ENCODE measurements at regions of chr9 and their contacts with region 1.

Region 1: DNA sequence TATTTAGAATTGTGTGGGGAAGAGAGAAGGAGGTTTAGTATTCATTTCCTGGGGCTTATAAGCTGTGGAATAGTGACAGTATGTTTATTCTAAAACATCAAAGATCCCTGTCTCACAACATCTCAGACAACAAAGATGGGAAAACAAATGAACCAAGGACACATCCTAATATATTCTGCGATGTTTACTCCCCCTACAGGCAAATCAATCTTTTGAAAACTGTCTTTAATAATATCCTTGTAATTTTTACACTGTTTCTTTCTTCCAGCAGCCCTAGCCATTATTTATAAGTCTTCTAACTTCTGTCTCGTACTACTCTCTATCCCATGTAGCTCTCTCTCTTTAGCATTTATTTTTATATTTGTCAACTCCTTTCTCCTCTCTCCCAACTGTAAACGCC is 33.5 kb upstream of the TMEM252 start:
- DNase-seq: no peak
- H3K4me3 ChIP-seq: no peak overlapping the region
- H3K27me3 ChIP-seq: no peaks in the 10 kb centered on the region
- CTCF ChIP-seq: peak; percentile 32; the same call in 1 of the 2 replicates

Region 2: DNA sequence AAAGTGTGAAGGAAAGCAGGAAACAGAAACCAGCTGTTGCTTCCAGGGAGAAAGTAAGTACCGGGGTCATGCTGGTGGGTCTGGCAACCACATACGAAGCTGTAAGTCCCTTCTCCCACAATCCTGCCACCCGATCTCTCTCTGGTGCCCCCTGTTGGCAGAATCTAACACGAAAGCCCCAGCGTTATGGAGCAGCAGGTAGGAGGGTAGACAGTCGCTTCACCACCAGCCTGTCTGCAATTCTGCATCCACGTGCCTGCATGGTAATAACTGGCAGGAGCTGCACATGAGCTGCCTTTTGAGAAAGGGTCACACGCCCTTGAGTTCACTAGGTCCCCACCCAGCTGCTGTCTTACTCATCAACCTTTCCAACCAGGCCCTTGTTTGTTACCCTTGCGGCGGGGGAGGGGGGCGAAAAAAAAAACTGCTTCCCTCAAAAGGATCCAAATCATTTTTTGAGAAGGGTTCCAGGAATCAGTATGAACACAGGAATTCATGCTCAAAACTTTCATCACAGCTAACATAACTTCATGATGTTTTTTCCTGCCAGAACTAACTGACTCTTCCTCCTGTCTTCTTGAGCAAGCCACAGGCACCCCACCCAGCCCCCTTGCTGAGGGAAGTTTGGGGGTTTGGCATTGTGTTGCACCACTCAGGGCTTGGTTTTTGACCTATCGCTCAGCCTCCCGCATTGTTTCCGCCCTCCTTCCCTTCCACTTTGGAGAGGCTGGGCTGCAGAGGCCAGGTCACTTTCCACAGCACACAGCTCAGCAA is 13.9 kb before region 1 on chr9:
- CTCF ChIA-PET with region 1: interaction called, 12 read pairs
- POLR2A ChIA-PET with region 1: no interaction called
- DNase-seq: no peak
- H3K4me3 ChIP-seq: no peak overlapping the region
- H3K27me3 ChIP-seq: no peaks in the 10 kb centered on the region
- CTCF ChIP-seq: peak; percentile 47

Region 3: DNA sequence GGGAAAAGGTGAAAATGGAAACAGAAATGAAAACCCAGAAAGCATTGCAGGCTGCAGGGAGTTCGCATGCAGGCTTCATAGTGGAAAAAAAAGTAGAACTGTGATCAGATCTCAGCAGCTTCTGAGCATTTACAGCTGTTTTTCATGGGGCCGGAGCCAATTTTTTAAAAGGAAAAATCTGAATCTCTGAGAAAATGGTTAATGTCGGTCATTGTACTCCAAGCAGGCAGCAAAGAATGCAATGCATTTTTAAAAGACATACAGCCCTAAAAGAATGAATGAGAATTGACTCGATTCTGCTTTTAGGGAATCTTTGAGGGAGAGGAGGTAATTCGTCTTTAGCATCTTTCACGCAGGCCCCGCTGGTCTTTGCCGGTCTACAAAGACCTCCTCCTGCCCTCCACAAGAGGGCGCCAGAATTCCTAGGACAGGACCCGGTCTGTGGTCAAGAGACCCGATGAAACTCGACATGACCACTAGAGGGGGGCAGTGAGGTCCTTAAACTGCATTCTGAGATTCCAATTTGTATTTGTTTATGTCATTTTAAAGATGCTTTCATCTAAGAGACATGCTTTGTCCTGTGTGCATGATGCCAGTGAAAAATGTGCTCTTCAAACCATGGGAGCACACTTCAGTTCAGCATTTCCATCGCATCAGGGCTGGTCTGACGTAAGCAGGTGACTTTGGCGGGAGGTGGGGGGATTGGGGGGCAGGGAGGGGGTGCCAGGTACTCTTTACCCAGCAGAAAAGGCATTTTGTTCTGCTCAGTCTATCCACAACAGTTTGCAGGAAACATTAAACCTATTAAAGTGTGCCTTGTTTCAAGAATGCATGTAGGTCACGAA is 10.3 kb after region 1 on chr9:
- CTCF ChIA-PET with region 1: interaction called, 26 read pairs
- POLR2A ChIA-PET with region 1: no interaction called
- DNase-seq: peak; percentile 16
- H3K4me3 ChIP-seq: no peak overlapping the region
- H3K27me3 ChIP-seq: no peaks in the 10 kb centered on the region
- CTCF ChIP-seq: peak; percentile 100

Measured in BJ (cell line).